MCF 10A (cell line): ENCODE measurements at regions of chr2 and their contacts with region 1.

Region 1: GRCh38 chr2:207473049-207473930 is 56.5 kb upstream of the CREB1 start:
- DNase-seq: peak; percentile 77
- H3K4me3 Mint-ChIP-seq: no peak overlapping the region
- H3K27ac Mint-ChIP-seq: peak overlapping the region; percentile 39
- H3K4me1 Mint-ChIP-seq: peaks cover 8% of the 10 kb centered on the region
- H3K27me3 Mint-ChIP-seq: no peaks in the 10 kb centered on the region
- CTCF ChIP-seq: peak; percentile 71

Region 2: DNA sequence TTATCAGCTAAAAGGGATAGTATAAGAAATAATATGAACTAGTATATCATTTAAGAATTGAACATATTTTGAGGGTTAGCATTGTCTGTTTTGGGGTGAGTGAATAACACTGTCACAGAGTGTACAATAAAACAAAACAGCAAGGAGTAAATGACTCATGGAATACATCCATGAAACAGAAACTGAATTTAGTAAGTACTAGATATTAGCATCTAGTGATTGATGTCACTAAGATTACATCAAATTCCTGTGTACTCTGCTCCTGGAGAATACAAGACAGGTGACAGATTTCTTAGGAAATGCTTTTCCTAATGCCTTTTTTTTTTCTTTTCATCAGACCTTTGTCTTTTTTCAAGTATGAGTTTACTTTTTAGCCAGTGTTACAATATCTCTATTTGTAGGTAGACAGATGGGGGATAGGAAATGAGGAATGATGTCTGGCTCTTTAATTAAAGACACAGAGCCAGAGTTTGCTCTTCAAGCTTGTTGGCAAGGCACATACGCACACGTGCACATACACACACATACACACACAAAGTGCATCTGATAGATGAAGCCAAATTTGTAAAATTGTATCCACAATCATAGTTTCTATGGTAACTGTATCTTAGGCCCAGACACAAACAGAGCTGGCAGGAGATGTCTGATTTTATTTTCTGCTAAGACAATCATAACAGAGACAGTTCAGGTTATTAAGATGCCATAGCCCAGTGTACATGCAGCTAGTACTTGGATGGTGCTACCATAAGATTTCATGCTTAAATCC is 1929.2 kb before region 1 on chr2:
- CTCF ChIA-PET with region 1: no interaction called
- POLR2A ChIA-PET with region 1: no interaction called
- intact Hi-C with region 1: no loop called
- DNase-seq: no peak
- H3K4me3 Mint-ChIP-seq: no peak overlapping the region
- H3K27ac Mint-ChIP-seq: no peak overlapping the region
- H3K4me1 Mint-ChIP-seq: no peaks in the 10 kb centered on the region
- H3K27me3 Mint-ChIP-seq: no peaks in the 10 kb centered on the region
- CTCF ChIP-seq: no peak

Region 3: DNA sequence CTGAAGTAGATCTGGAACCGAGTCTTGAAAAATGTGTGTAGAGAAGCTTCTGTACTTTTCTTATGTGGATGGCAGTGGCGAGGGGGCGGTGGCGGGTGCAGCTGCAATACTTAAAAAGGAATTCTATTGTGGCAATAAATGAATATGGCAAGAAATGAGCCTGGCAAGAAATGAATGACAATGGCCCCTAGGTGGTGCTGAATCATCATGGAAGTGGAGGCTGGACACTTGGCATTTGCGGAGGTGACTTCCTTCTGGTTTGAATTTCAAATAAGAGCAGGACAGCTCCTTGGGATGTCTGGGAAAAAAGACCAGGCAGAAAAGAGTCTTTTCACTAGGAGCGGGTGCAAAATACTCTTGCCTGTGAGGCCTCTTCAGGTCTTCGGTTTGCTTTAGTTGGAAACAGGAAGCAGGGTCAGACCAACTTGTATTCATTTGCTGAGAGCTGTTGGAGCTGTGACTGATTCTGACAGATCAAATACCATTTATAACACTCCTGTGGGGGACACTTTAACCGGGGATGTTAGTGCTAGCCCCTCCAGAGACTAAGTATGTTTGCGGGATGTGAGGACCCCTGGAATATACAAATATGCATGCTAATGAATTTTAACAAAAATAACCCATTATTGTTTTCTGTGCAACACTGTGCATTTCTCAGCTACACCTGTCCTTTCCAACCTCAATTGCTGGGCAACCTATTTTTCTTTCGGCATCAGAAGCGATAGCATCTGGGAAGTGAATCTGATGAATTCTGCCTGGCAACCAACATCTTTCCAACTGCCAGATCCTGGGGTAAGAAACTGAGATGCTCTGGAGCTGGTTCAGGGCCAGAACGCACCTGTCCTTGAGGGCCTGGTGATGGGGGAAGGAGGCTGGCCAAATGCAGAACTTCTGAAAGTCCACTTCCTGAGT is 672.5 kb before region 1 on chr2:
- CTCF ChIA-PET with region 1: interaction called, 85 read pairs
- POLR2A ChIA-PET with region 1: interaction called, 4 read pairs
- intact Hi-C with region 1: loop called (anchors 1 kb)
- DNase-seq: peak; percentile 84
- H3K4me3 Mint-ChIP-seq: no peak overlapping the region
- H3K27ac Mint-ChIP-seq: no peak overlapping the region
- H3K4me1 Mint-ChIP-seq: no peaks in the 10 kb centered on the region
- H3K27me3 Mint-ChIP-seq: no peaks in the 10 kb centered on the region
- CTCF ChIP-seq: peak; percentile 76

Region 4: GRCh38 chr2:206986943-206987342 is 486.3 kb before region 1 on chr2:
- CTCF ChIA-PET with region 1: interaction called, 134 read pairs
- POLR2A ChIA-PET with region 1: interaction called, 6 read pairs
- intact Hi-C with region 1: no loop called
- DNase-seq: no peak
- H3K4me3 Mint-ChIP-seq: no peak overlapping the region
- H3K27ac Mint-ChIP-seq: no peak overlapping the region
- H3K4me1 Mint-ChIP-seq: peaks cover 22% of the 10 kb centered on the region
- H3K27me3 Mint-ChIP-seq: no peaks in the 10 kb centered on the region
- CTCF ChIP-seq: no peak

Region 5: GRCh38 chr2:207238831-207239701 is 234.2 kb before region 1 on chr2:
- CTCF ChIA-PET with region 1: interaction called, 15 read pairs
- POLR2A ChIA-PET with region 1: interaction called, 4 read pairs
- intact Hi-C with region 1: loop called (anchors 2 kb)
- DNase-seq: peak; percentile 99
- H3K4me3 Mint-ChIP-seq: no peak overlapping the region
- H3K27ac Mint-ChIP-seq: no peak overlapping the region
- H3K4me1 Mint-ChIP-seq: peaks cover 15% of the 10 kb centered on the region
- H3K27me3 Mint-ChIP-seq: no peaks in the 10 kb centered on the region
- CTCF ChIP-seq: no peak

Region 6: DNA sequence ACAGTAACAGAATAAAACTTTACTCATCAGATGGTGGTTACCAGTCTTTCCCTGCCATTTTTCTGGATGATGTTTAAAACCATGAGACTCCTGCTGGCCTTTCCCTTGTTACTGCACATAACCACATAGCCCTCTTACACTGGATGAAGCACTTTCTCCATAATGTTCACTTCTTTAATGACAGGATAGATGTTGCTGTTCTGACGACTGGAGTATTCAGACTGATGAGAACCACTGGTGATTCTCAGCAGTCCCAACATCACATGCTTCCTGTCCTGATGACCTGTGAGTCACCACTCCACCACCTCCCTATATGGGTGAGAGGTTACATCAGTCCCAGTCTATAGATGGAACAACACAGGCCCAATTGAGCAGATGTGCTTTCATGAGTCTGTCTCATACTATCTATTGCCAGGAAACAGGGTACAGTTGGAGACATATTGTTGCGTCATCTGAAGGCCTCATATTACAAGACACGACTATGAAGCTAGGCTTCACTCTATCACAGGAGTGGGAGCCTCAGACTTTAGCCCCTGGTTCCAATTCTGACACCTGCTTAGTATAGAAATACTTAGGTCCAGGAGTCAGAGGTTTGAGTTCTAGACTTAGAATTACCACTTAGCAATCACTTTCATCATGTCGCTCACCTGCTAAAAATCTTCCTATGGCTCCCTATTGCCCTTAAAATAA is 161.8 kb before region 1 on chr2:
- CTCF ChIA-PET with region 1: interaction called, 4 read pairs
- POLR2A ChIA-PET with region 1: interaction called, 3 read pairs
- intact Hi-C with region 1: loop called (anchors 1 kb)
- DNase-seq: peak; percentile 97
- H3K4me3 Mint-ChIP-seq: no peak overlapping the region
- H3K27ac Mint-ChIP-seq: peak overlapping the region; percentile 74
- H3K4me1 Mint-ChIP-seq: peaks cover 27% of the 10 kb centered on the region
- H3K27me3 Mint-ChIP-seq: no peaks in the 10 kb centered on the region
- CTCF ChIP-seq: peak; percentile 23

Region 7: GRCh38 chr2:207394812-207395534 is 78.3 kb before region 1 on chr2:
- CTCF ChIA-PET with region 1: no interaction called
- POLR2A ChIA-PET with region 1: no interaction called
- intact Hi-C with region 1: loop called (anchors 1 kb)
- DNase-seq: peak; percentile 97
- H3K4me3 Mint-ChIP-seq: no peak overlapping the region
- H3K27ac Mint-ChIP-seq: peak overlapping the region; percentile 85
- H3K4me1 Mint-ChIP-seq: peaks cover 27% of the 10 kb centered on the region
- H3K27me3 Mint-ChIP-seq: no peaks in the 10 kb centered on the region
- CTCF ChIP-seq: no peak

Region 8: GRCh38 chr2:207867056-207867455 is 393.8 kb after region 1 on chr2:
- CTCF ChIA-PET with region 1: no interaction called
- POLR2A ChIA-PET with region 1: no interaction called
- intact Hi-C with region 1: no loop called
- DNase-seq: no peak
- H3K4me3 Mint-ChIP-seq: no peak overlapping the region
- H3K27ac Mint-ChIP-seq: no peak overlapping the region
- H3K4me1 Mint-ChIP-seq: peaks cover 8% of the 10 kb centered on the region
- H3K27me3 Mint-ChIP-seq: no peaks in the 10 kb centered on the region
- CTCF ChIP-seq: no peak

Region 9: GRCh38 chr2:207892716-207893402 is 419.6 kb after region 1 on chr2:
- CTCF ChIA-PET with region 1: no interaction called
- POLR2A ChIA-PET with region 1: no interaction called
- intact Hi-C with region 1: no loop called
- DNase-seq: no peak
- H3K4me3 Mint-ChIP-seq: no peak overlapping the region
- H3K27ac Mint-ChIP-seq: no peak overlapping the region
- H3K4me1 Mint-ChIP-seq: no peaks in the 10 kb centered on the region
- H3K27me3 Mint-ChIP-seq: no peaks in the 10 kb centered on the region
- CTCF ChIP-seq: no peak